H1 (cell line): ENCODE measurements at regions of chr12 and their contacts with region 1.

Region 1: GRCh38 chr12:95217377-95218149 is at the starts of genes FGD6 and VEZT:
- DNase-seq: peak; percentile 96 to 99
- H3K4me3 ChIP-seq: peak within 1 kb of the TSS; percentile 77 to 93 (median 86)
- H3K27ac ChIP-seq: peak within 1 kb of the TSS; percentile 97
- H3K4me1 ChIP-seq: peaks cover 0 to 9% (median 2%) of the 10 kb centered on the region in 4 experiments; a peak in 3 of 7 replicates
- H3K27me3 ChIP-seq: no peaks in the 10 kb centered on the region
- CTCF ChIP-seq: peak in 1 of 3 experiments; percentile 48; a peak in 1 of 4 replicates
- EP300 ChIP-seq: peak in 1 of 2 experiments; percentile 64; a peak in 1 of 3 replicates
- POLR2A ChIP-seq: peak; percentile 60 to 64
- RAD21 ChIP-seq: peak; percentile 33 to 48; a peak in 3 of 4 replicates
- total RNA-seq, gene FGD6: 22.4 and 24.3 TPM in 2 replicates
- total RNA-seq, gene VEZT: 51.1 and 56.1 TPM in 2 replicates

Region 2: GRCh38 chr12:95072900-95073697 is 144.5 kb before region 1 on chr12 and contains the start of gene NR2C1:
- CTCF ChIA-PET with region 1: no interaction called
- POLR2A ChIA-PET with region 1: interaction called, 10 read pairs
- DNase-seq: peak; percentile 86 to 91
- H3K4me3 ChIP-seq: peak within 1 kb of the TSS; percentile 79 to 97 (median 86)
- H3K27ac ChIP-seq: peak within 1 kb of the TSS; percentile 71
- H3K4me1 ChIP-seq: no peaks in the 10 kb centered on the region
- H3K27me3 ChIP-seq: no peaks in the 10 kb centered on the region
- CTCF ChIP-seq: no peak
- EP300 ChIP-seq: no peak
- POLR2A ChIP-seq: no peak
- RAD21 ChIP-seq: no peak
- total RNA-seq, gene NR2C1: 39.0 and 48.3 TPM in 2 replicates

Region 3: DNA sequence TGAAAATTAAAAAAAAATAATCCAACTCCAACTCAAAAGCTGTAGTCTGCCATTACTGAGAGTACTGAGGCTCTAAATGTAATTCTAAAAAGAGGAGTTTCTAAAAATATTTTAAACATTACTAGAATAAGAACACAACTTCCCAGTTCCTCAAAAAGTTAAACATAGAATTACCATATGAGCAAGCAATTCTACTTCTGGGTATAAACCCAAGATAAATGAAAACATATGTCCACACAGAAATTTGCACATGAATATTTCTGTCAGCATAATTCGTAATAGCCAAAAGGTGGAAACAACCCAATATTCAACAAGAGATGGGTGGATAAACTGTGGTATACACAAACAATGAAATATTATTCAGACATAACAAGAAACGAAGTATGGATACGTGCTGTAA is 129.2 kb before region 1 on chr12:
- CTCF ChIA-PET with region 1: no interaction called
- POLR2A ChIA-PET with region 1: no interaction called
- DNase-seq: no peak
- H3K4me3 ChIP-seq: no peak overlapping the region
- H3K27ac ChIP-seq: no peak overlapping the region
- H3K4me1 ChIP-seq: no peaks in the 10 kb centered on the region
- H3K27me3 ChIP-seq: no peaks in the 10 kb centered on the region
- CTCF ChIP-seq: no peak
- EP300 ChIP-seq: no peak
- POLR2A ChIP-seq: no peak
- RAD21 ChIP-seq: no peak

Region 4: DNA sequence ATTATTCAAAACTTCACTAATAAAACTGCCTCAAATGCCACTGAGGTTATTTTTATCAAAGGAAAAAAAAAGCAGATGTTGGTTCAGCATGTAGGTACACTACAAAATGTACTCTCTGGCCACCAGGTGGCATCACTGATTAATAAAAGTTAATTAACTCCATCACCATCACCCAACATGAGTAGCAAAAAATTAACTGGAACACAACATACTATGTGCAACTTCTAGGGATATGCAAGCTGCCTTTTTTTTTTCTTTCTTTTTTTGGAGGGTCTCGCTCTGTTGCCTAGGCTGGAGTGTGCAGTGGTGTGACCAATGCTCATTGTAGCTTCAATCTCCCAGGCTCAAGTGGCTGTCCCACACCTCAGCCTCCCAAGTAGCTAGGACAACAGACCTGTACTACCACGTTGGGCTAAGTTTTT is 100.4 kb before region 1 on chr12:
- CTCF ChIA-PET with region 1: interaction called, 5 read pairs
- POLR2A ChIA-PET with region 1: interaction called, 11 read pairs
- DNase-seq: peak in 1 of 2 experiments; percentile 51
- H3K4me3 ChIP-seq: no peak overlapping the region
- H3K27ac ChIP-seq: no peak overlapping the region
- H3K4me1 ChIP-seq: peaks cover 0 to 11% (median 2%) of the 10 kb centered on the region in 4 experiments; a peak in 2 of 7 replicates
- H3K27me3 ChIP-seq: no peaks in the 10 kb centered on the region
- CTCF ChIP-seq: peak in 2 of 3 experiments; percentile 42 to 61; a peak in 2 of 4 replicates
- EP300 ChIP-seq: no peak
- POLR2A ChIP-seq: no peak
- RAD21 ChIP-seq: peak; percentile 73 to 77

Region 5: GRCh38 chr12:95198914-95199313 is 18.6 kb before region 1 on chr12:
- CTCF ChIA-PET with region 1: interaction called, 4 read pairs
- POLR2A ChIA-PET with region 1: interaction called, 89 read pairs
- DNase-seq: no peak
- H3K4me3 ChIP-seq: peak overlapping the region in 1 of 4 experiments; percentile 8; a peak in 1 of 8 replicates
- H3K27ac ChIP-seq: peak overlapping the region; percentile 21; the same call in 1 of the 2 replicates
- H3K4me1 ChIP-seq: peaks cover 0 to 15% (median 11%) of the 10 kb centered on the region in 4 experiments
- H3K27me3 ChIP-seq: no peaks in the 10 kb centered on the region
- CTCF ChIP-seq: no peak
- EP300 ChIP-seq: no peak
- POLR2A ChIP-seq: no peak
- RAD21 ChIP-seq: no peak

Region 6: GRCh38 chr12:95204141-95204866 is 13.3 kb before region 1 on chr12:
- CTCF ChIA-PET with region 1: interaction called, 6 read pairs
- POLR2A ChIA-PET with region 1: interaction called, 89 read pairs
- DNase-seq: peak; percentile 53 to 54
- H3K4me3 ChIP-seq: no peak overlapping the region; a peak in 1 of 8 replicates
- H3K27ac ChIP-seq: no peak overlapping the region; the same call in none of the 2 replicates
- H3K4me1 ChIP-seq: peaks cover 2 to 40% (median 30%) of the 10 kb centered on the region in 4 experiments
- H3K27me3 ChIP-seq: no peaks in the 10 kb centered on the region
- CTCF ChIP-seq: no peak
- EP300 ChIP-seq: no peak
- POLR2A ChIP-seq: no peak
- RAD21 ChIP-seq: no peak

Region 7: GRCh38 chr12:95231190-95231589 is 13.6 kb after region 1 on chr12:
- CTCF ChIA-PET with region 1: no interaction called
- POLR2A ChIA-PET with region 1: interaction called, 17 read pairs
- DNase-seq: no peak
- H3K4me3 ChIP-seq: no peak overlapping the region
- H3K27ac ChIP-seq: no peak overlapping the region
- H3K4me1 ChIP-seq: no peaks in the 10 kb centered on the region
- H3K27me3 ChIP-seq: no peaks in the 10 kb centered on the region
- CTCF ChIP-seq: no peak
- EP300 ChIP-seq: no peak
- POLR2A ChIP-seq: no peak
- RAD21 ChIP-seq: no peak